AG04449 (cell line): ENCODE measurements at regions of chr4 and their contacts with region 1.

Region 1: DNA sequence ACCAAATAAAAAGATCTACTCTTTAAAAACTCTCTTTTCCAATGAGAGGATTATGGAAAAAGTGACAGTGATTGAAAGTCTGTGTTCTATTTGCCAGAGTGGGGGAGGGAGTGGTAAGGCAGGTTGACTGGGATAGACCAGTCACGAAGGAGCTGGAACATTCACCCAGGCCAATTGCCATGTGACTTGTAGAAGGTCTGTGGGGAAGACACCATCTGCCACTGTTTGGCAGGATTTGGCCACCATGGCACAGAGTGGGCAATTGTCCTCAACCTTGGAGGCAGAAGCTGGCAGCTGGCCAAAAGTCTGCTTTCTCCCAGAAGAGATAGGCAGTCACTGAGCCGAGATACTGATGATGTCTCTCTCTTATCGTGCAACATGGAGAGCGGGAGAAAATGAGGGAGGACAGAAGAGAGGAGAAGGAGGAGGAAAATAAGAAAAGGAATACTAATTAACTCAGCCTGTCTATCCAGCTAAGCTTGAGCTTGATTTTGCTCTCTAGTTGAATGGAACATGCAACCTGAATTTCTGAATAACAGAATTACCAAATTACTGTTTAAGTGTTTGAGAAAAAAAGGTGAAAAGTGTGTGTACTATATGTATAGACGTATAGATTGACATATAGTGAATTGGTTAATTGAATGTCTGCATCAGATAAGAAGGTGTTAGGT is 267.1 kb downstream of the ARHGAP24 start:
- DNase-seq: no peak
- H3K4me3 ChIP-seq: no peak overlapping the region
- CTCF ChIP-seq: no peak

Region 2: DNA sequence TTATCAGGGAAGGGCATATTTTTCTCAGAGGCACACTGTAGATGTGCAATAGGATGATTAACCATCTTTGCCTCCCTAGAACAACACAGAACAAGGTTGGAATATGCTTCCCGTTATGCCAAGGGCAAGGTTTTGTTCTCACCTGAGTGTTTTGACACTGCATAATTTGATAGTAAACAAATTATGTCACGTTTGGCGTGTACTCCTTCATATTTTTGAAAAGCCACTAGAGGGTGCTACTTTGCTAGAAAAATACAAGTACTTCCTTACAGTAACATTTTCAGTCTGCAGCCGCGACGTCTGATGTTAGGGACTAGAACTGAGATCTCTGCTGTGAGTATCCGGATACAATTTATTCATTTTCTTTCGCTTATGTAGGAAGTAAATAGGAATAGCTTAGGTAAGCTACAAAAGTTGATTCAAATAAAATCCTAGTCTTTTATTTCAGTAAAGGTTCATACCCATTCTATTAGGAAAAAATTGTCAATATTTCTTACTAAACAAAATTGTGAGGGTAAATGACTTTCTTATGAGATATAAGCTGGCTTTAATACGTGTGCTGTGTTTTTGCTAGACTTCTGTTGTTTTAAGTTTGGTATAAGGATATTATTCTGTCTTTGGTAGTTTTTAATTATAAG is 594.5 kb before region 1 on chr4:
- CTCF ChIA-PET with region 1: interaction called, 83 read pairs
- POLR2A ChIA-PET with region 1: no interaction called
- DNase-seq: peak; percentile 10
- H3K4me3 ChIP-seq: no peak overlapping the region
- CTCF ChIP-seq: peak; percentile 42

Region 3: DNA sequence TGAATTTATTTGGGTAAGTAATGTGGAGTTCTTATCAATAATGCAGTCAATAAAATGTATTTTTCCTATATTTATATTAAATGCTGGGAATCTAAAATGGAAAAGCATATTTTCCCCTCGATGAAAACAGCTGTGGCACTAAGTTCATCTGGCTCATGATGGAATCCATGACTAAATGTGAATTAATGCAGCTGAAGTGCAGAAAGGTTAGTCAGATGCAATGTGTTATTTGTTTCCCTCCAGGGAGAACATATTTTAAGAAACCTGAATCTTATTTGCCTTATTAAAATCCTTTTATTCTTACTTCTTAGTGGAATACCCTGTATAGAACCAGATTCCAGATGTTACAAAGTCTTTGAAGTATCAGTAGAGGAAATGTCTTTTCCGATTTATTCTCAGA is 19.2 kb before region 1 on chr4:
- CTCF ChIA-PET with region 1: no interaction called
- POLR2A ChIA-PET with region 1: no interaction called
- DNase-seq: no peak
- H3K4me3 ChIP-seq: no peak overlapping the region
- CTCF ChIP-seq: no peak